ENCODE measurements at regions of chr1 and their contacts with region 1.

Region 1: DNA sequence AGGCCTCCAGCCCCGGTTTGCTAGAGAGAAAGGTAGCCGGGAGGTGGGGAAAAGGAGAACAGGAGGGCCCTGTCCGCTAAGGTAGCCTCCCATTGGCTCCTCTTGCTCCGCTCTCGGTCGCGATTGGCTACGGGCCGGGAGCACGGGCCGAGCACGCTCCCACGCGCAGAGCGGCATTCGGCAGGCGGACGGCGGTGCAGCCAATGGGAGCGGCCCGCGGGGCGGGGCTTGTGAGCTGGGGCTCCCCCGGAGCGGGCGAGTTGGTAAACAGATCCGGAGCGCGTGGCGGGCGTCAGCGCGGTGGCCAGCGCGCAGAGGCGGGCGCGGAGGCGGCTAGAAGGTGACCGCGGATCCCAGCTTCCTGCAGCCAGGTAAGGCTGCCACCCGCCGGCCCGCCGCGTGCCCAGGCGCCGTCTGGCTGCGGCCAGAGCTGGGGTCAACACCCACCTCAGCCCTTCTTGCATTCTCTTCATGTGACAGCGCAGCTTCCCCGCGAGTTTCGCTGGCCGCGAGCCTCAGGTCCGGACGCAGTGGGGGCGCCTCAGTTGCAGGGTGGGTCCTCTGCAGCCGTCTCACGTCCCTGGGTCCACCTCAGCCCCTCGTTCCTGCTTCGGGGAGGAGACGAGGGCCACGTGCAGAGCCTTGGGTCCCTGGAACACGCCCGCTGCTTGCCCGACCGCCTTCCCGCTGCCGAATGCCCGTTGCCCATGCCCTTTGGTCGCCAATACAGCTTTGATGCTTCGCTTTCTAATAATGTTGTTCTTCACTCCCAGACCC is at the start of gene COQ8A:
- DNase-seq: peak; percentile 100
- H3K4me3 Mint-ChIP-seq: peak within 1 kb of the TSS; percentile 93
- H3K27ac Mint-ChIP-seq: peak within 1 kb of the TSS; percentile 99
- H3K4me1 Mint-ChIP-seq: peaks cover 42% of the 10 kb centered on the region
- H3K27me3 Mint-ChIP-seq: no peaks in the 10 kb centered on the region
- total RNA-seq, gene COQ8A: 27.0 and 35.3 TPM in 2 replicates

Region 2: DNA sequence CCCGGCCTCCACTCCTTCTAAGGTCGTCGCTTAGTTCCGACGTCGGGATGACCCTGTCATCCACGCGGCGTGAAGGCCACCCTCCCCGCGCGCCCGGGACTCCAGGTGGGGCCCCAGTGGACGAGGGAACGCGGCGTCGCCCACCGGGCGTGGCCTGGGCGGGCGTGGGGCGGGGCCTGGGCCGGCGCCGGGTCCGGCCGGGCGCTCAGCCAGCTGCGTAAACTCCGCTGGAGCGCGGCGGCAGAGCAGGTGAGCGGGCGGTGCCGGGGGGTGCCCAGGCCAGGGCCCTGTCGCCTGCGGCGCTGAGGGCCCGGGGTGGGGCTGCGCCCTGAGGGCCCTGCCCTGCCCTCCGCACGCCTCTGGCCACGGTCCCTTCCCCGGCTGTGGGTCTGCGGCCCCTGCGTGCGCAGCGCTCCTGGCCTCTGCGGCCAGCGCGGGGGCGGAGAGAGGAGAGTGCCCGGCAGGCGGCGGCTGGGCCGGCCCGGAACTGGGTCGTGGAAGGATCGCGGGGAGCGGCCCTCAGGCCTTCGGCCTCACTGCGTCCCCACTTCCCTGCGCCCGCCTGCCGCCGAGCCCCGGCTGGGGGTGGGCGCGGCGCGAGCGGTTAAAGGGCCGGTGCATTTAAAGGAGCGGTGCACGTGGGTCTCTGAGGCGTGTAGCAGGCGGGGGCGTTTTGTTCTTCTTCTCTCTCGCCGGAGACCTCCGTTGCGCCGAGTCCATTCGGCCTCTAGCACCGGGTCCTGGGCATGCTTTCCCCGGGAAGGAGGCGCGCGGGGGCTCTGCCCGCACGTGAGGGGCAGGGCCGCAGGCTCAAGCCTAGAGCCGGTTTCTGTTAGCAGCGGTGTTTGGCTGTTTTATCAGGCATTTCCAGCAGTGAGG is 69.6 kb before region 1 on chr1 and contains the start of gene PSEN2:
- intact Hi-C with region 1: loop called (anchors 1 kb)
- DNase-seq: peak; percentile 93
- H3K4me3 Mint-ChIP-seq: peak within 1 kb of the TSS; percentile 84
- H3K27ac Mint-ChIP-seq: peak within 1 kb of the TSS; percentile 78
- H3K4me1 Mint-ChIP-seq: peaks cover 16% of the 10 kb centered on the region
- H3K27me3 Mint-ChIP-seq: peaks cover 24% of the 10 kb centered on the region
- total RNA-seq, gene PSEN2: 10.4 and 10.7 TPM in 2 replicates

Region 3: GRCh38 chr1:226882631-226883409 is 57.4 kb before region 1 on chr1:
- intact Hi-C with region 1: loop called (anchors 1 kb)
- DNase-seq: peak; percentile 84
- H3K4me3 Mint-ChIP-seq: peak overlapping the region; percentile 72
- H3K27ac Mint-ChIP-seq: peak overlapping the region; percentile 95
- H3K4me1 Mint-ChIP-seq: peaks cover 53% of the 10 kb centered on the region
- H3K27me3 Mint-ChIP-seq: no peaks in the 10 kb centered on the region

Region 4: GRCh38 chr1:226915672-226915995 is 24.6 kb before region 1 on chr1:
- intact Hi-C with region 1: loop called (anchors 1 kb)
- DNase-seq: no peak
- H3K4me3 Mint-ChIP-seq: no peak overlapping the region
- H3K27ac Mint-ChIP-seq: peak overlapping the region; percentile 6
- H3K4me1 Mint-ChIP-seq: peaks cover 7% of the 10 kb centered on the region
- H3K27me3 Mint-ChIP-seq: no peaks in the 10 kb centered on the region

Region 5: DNA sequence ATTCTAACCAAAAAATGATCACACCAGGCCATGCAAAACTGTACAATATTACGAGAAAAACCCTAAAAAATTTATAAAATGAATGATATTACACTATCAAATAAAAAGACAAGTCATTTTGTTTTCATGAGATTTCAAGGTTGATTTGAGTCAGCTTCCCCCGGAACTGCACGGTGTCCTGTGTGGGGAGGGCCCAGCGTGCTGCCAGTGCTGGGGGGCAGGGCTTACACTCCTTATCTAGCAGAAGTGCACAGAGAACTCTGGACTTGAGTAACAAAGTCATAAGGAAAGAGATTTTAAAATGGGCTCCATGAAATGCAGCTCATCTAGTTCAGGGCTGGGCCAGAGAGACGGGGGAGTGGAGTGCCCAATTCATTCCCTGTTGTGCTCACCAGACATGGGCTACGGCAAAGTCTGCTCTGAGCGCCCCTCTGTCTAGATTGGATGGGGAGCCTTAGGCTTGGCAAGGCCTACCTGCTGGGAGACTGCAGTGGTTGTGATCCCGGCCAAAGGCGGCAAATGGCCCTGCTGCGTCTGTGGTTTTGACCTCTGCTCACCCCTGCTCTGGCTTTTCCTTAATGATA is 50.0 kb after region 1 on chr1:
- intact Hi-C with region 1: no loop called
- DNase-seq: peak; percentile 81
- H3K4me3 Mint-ChIP-seq: no peak overlapping the region
- H3K27ac Mint-ChIP-seq: peak overlapping the region; percentile 18
- H3K4me1 Mint-ChIP-seq: peaks cover 14% of the 10 kb centered on the region
- H3K27me3 Mint-ChIP-seq: no peaks in the 10 kb centered on the region

Region 6: DNA sequence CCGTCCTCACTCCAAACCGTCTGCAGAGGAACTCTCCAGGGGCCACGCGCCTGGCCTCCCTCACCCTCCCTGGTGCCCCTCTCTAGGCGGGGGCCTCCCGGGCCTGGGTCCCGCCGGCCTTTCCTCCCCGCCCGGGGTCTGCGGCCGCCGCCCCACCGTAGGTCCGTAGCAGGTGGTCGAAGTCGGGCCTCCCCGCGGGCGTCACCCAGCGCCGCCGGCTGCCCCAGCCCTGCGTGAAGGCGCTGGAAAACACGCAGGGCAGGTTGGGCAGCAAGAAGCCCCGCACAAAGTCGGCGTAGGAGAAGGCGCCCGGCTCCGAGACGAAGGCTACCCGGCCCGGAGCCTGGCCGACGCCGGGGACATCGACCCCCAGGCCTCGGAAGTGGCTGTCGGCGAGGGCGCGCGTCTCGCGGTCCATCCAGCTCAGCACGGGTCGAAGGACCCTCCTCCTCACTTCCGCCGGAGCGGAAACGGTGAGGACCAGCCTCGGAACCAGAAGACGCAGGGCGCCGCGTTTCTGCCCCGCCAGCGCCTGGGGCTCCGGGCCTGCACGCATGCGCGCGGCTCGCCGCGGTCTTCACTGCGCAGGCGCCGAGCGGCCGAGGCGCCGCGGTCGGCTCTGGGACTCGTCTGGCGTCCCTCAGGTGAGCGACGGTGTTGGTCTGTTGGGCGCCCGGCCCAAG is 794.8 kb after region 1 on chr1 and contains the starts of genes JMJD4 and SNAP47:
- intact Hi-C with region 1: loop called (anchors 10 kb)
- DNase-seq: peak; percentile 99
- H3K4me3 Mint-ChIP-seq: peak within 1 kb of the TSS; percentile 98
- H3K27ac Mint-ChIP-seq: peak within 1 kb of the TSS; percentile 93
- H3K4me1 Mint-ChIP-seq: peaks cover 26% of the 10 kb centered on the region
- H3K27me3 Mint-ChIP-seq: peaks cover 2% of the 10 kb centered on the region
- total RNA-seq, gene JMJD4: 34.8 and 35.1 TPM in 2 replicates
- total RNA-seq, gene SNAP47: 28.6 and 30.9 TPM in 2 replicates

Measured in activated CD4-positive, alpha-beta T cell treated with anti-CD3 and anti-CD28 coated beads, Interleukin-2, amount 10 ng/mL, durations not matched to agents 24 days and 14 days (primary cell).